ENCODE measurements at regions of chr10 and their contacts with region 1.

Region 1: GRCh38 chr10:73879296-73880173 is 5.2 kb upstream of the CAMK2G start:
- DNase-seq: peak; percentile 91 to 98 (median 96)
- ATAC-seq: peak; percentile 97
- H3K4me3 ChIP-seq: no peak overlapping the region
- H3K4me3 Mint-ChIP-seq: peak overlapping the region in 5 of 10 donors; percentile 0 to 40 (median 1)
- H3K27ac ChIP-seq: peak overlapping the region; percentile 68
- H3K27ac Mint-ChIP-seq: peak overlapping the region; percentile 30 to 98 (median 89)
- H3K4me1 ChIP-seq: peaks cover 18 to 22% of the 10 kb centered on the region in 2 donors
- H3K4me1 Mint-ChIP-seq: peaks cover 14 to 51% (median 41%) of the 10 kb centered on the region in 7 donors
- H3K27me3 ChIP-seq: no peaks in the 10 kb centered on the region
- H3K27me3 Mint-ChIP-seq: peaks cover 0 to 5% (median 0%) of the 10 kb centered on the region in 5 donors

Region 2: GRCh38 chr10:73413528-73414229 is 465.9 kb before region 1 on chr10 and contains the start of gene ANXA7:
- CTCF ChIA-PET with region 1: no interaction called
- POLR2A ChIA-PET with region 1: no interaction called
- intact Hi-C with region 1: loop called in 1 of 2 experiments (anchors 10 kb)
- DNase-seq: peak; percentile 78 to 93 (median 85)
- ATAC-seq: peak; percentile 99
- H3K4me3 ChIP-seq: peak within 1 kb of the TSS; percentile 78
- H3K4me3 Mint-ChIP-seq: peak within 1 kb of the TSS; percentile 82 to 97 (median 94)
- H3K27ac ChIP-seq: peak within 1 kb of the TSS; percentile 98
- H3K27ac Mint-ChIP-seq: peak within 1 kb of the TSS; percentile 83 to 95 (median 90)
- H3K4me1 ChIP-seq: peaks cover 8 to 16% of the 10 kb centered on the region in 2 donors
- H3K4me1 Mint-ChIP-seq: peaks cover 39 to 60% (median 53%) of the 10 kb centered on the region in 7 donors
- H3K27me3 ChIP-seq: no peaks in the 10 kb centered on the region
- H3K27me3 Mint-ChIP-seq: peaks cover 0 to 4% (median 0%) of the 10 kb centered on the region in 5 donors
- total RNA-seq, gene ANXA7: 74.8 to 118 (median 97.3) TPM

Region 3: DNA sequence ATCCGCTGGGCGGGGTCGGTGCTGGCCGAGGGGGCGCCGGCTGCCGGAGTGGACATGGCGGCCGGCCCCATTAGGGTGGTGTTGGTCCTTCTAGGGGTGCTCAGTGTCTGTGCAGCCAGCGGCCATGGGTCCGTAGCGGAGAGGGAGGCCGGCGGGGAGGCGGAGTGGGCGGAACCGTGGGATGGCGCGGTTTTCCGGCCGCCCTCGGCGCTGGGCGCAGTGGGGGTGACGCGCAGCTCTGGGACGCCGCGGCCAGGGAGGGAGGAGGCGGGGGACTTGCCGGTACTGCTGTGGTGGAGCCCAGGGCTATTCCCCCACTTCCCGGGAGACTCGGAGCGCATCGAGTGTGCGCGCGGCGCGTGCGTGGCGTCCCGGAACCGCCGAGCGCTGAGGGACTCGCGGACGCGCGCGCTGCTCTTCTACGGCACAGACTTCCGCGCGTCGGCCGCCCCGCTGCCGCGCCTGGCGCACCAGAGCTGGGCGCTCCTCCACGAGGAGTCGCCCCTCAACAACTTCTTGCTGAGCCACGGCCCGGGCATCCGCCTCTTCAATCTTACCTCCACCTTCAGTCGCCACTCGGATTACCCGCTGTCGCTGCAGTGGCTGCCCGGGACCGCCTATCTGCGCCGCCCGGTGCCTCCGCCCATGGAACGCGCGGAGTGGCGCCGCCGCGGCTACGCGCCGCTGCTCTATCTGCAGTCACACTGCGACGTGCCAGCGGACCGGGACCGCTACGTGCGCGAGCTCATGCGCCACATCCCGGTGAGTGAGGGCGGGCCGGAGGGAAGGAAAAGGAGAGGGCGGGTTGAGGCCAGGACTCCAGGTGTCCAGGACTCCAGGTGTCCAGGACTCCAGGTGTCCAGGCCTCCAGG is 107.0 kb before region 1 on chr10:
- CTCF ChIA-PET with region 1: interaction called, 14 read pairs
- POLR2A ChIA-PET with region 1: interaction called, 16 read pairs
- intact Hi-C with region 1: loop called (anchors 1 kb)
- DNase-seq: peak; percentile 75 to 90 (median 83)
- ATAC-seq: peak; percentile 80
- H3K4me3 ChIP-seq: peak overlapping the region; percentile 69
- H3K4me3 Mint-ChIP-seq: peak overlapping the region; percentile 87 to 97 (median 95)
- H3K27ac ChIP-seq: peak overlapping the region; percentile 85
- H3K27ac Mint-ChIP-seq: peak overlapping the region; percentile 89 to 97 (median 94)
- H3K4me1 ChIP-seq: peaks cover 27 to 30% of the 10 kb centered on the region in 2 donors
- H3K4me1 Mint-ChIP-seq: peaks cover 34 to 73% (median 64%) of the 10 kb centered on the region in 7 donors
- H3K27me3 ChIP-seq: no peaks in the 10 kb centered on the region
- H3K27me3 Mint-ChIP-seq: no peaks in the 10 kb centered on the region

Region 4: GRCh38 chr10:73823391-73823790 is 56.1 kb before region 1 on chr10:
- CTCF ChIA-PET with region 1: interaction called, 11 read pairs
- POLR2A ChIA-PET with region 1: no interaction called
- intact Hi-C with region 1: no loop called
- DNase-seq: no peak
- ATAC-seq: no peak
- H3K4me3 ChIP-seq: no peak overlapping the region
- H3K4me3 Mint-ChIP-seq: no peak overlapping the region
- H3K27ac ChIP-seq: no peak overlapping the region
- H3K27ac Mint-ChIP-seq: no peak overlapping the region
- H3K4me1 ChIP-seq: no peaks in the 10 kb centered on the region
- H3K4me1 Mint-ChIP-seq: peaks cover 0 to 5% (median 0%) of the 10 kb centered on the region in 7 donors
- H3K27me3 ChIP-seq: no peaks in the 10 kb centered on the region
- H3K27me3 Mint-ChIP-seq: no peaks in the 10 kb centered on the region

Region 5: GRCh38 chr10:73857446-73857845 is 22.1 kb before region 1 on chr10:
- CTCF ChIA-PET with region 1: interaction called, 288 read pairs
- POLR2A ChIA-PET with region 1: interaction called, 327 read pairs
- intact Hi-C with region 1: no loop called
- DNase-seq: no peak
- ATAC-seq: no peak
- H3K4me3 ChIP-seq: no peak overlapping the region
- H3K4me3 Mint-ChIP-seq: peak overlapping the region in 5 of 10 donors; percentile 9 to 75 (median 54)
- H3K27ac ChIP-seq: no peak overlapping the region
- H3K27ac Mint-ChIP-seq: peak overlapping the region; percentile 26 to 84 (median 71)
- H3K4me1 ChIP-seq: peaks cover 23 to 30% of the 10 kb centered on the region in 2 donors
- H3K4me1 Mint-ChIP-seq: peaks cover 19 to 70% (median 63%) of the 10 kb centered on the region in 7 donors
- H3K27me3 ChIP-seq: no peaks in the 10 kb centered on the region
- H3K27me3 Mint-ChIP-seq: no peaks in the 10 kb centered on the region

Region 6: GRCh38 chr10:73940634-73941221 is 61.2 kb after region 1 on chr10:
- CTCF ChIA-PET with region 1: interaction called, 301 read pairs
- POLR2A ChIA-PET with region 1: interaction called, 8 read pairs
- intact Hi-C with region 1: loop called (anchors 2 kb)
- DNase-seq: peak; percentile 61 to 89 (median 79)
- ATAC-seq: peak; percentile 99
- H3K4me3 ChIP-seq: no peak overlapping the region
- H3K4me3 Mint-ChIP-seq: peak overlapping the region in 7 of 10 donors; percentile 0 to 51 (median 42)
- H3K27ac ChIP-seq: no peak overlapping the region
- H3K27ac Mint-ChIP-seq: peak overlapping the region in 2 of 9 donors; percentile 71 to 80
- H3K4me1 ChIP-seq: peaks cover 0 to 6% of the 10 kb centered on the region in 2 donors
- H3K4me1 Mint-ChIP-seq: peaks cover 0 to 17% (median 7%) of the 10 kb centered on the region in 7 donors
- H3K27me3 ChIP-seq: no peaks in the 10 kb centered on the region
- H3K27me3 Mint-ChIP-seq: peaks cover 0 to 24% (median 0%) of the 10 kb centered on the region in 5 donors